Endothelial cell of umbilical vein (primary cell): ENCODE measurements at regions of chr6 and their contacts with region 1.

Region 1: GRCh38 chr6:80182291-80182690 is 75.8 kb downstream of the BCKDHB start:
- DNase-seq: peak; percentile 75
- H3K4me3 ChIP-seq: no peak overlapping the region
- H3K27ac ChIP-seq: peak overlapping the region; percentile 87
- H3K4me1 ChIP-seq: peaks cover 32% of the 10 kb centered on the region
- H3K27me3 ChIP-seq: no peaks in the 10 kb centered on the region
- CTCF ChIP-seq: no peak
- POLR2A ChIP-seq: no peak

Region 2: GRCh38 chr6:80106418-80107235 is 75.7 kb before region 1 on chr6 and contains the start of gene BCKDHB:
- CTCF ChIA-PET with region 1: no interaction called
- POLR2A ChIA-PET with region 1: no interaction called
- dilution Hi-C with region 1: no loop called
- intact Hi-C with region 1: loop called (anchors 2 kb)
- DNase-seq: peak; percentile 99
- H3K4me3 ChIP-seq: peak within 1 kb of the TSS; percentile 63 to 90 (median 66)
- H3K27ac ChIP-seq: peak within 1 kb of the TSS; percentile 13
- H3K4me1 ChIP-seq: peaks cover 3% of the 10 kb centered on the region
- H3K27me3 ChIP-seq: peaks cover 0 to 4% of the 10 kb centered on the region in 2 experiments
- CTCF ChIP-seq: no peak
- POLR2A ChIP-seq: peak; percentile 96
- total RNA-seq, gene BCKDHB: 11.5 and 12.2 TPM in 2 replicates

Region 3: DNA sequence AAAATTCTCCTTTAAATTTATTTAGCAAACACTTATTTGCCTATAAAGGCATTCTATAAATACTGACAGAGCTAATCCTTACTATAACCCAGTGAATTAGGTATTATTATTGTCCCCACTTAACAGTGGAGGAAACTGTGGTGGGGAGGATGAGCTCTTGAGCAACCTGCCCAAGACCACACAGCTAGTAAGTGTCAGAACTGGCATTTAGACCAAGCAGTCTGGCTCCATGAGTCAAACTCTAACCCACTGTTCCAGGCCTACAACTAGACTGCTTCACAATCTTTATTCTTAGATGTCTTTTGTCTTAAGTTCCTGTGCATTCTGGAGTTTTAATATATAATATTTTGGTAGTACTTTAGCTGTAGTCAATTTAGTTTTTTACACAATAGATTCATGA is 455.0 kb after region 1 on chr6:
- CTCF ChIA-PET with region 1: no interaction called
- POLR2A ChIA-PET with region 1: no interaction called
- dilution Hi-C with region 1: no loop called
- intact Hi-C with region 1: no loop called
- DNase-seq: no peak
- H3K4me3 ChIP-seq: no peak overlapping the region
- H3K27ac ChIP-seq: no peak overlapping the region
- H3K4me1 ChIP-seq: peaks cover 17% of the 10 kb centered on the region
- H3K27me3 ChIP-seq: no peaks in the 10 kb centered on the region
- CTCF ChIP-seq: no peak
- POLR2A ChIP-seq: no peak